ENCODE measurements at regions of chr1 and their contacts with region 1.

Region 1: DNA sequence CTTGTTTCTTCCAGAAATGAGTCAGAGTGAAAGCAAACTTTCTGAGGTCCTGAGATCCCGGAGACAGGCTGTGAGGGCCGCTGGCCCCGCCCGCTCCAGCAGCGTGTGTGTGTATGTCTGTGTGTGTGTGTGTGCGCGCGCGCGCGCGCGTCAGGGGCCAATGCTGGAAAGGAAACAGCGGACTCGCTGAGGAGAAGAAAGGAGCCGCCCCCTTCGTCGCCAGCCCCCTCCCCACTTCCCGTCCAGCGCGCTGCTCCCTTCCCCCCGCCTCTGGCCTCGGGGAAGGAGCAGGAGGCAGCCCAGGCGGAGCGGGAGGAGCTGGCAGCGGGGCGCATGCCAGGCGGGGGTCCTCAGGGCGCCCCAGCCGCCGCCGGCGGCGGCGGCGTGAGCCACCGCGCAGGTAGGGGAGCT is at the start of gene DISC1:
- DNase-seq: peak; percentile 66 to 79 (median 71)
- H3K4me3 ChIP-seq: peak within 1 kb of the TSS; percentile 43 to 79
- H3K4me3 Mint-ChIP-seq: peak within 1 kb of the TSS; percentile 94 to 100 (median 96)
- H3K27ac ChIP-seq: peak within 1 kb of the TSS; percentile 63
- H3K27ac Mint-ChIP-seq: peak within 1 kb of the TSS; percentile 91 to 98 (median 96)
- H3K4me1 ChIP-seq: peaks cover 32% of the 10 kb centered on the region
- H3K4me1 Mint-ChIP-seq: peaks cover 20 to 47% (median 33%) of the 10 kb centered on the region in 4 donors
- H3K27me3 ChIP-seq: no peaks in the 10 kb centered on the region
- H3K27me3 Mint-ChIP-seq: peaks cover 0 to 2% of the 10 kb centered on the region in 2 donors
- total RNA-seq, gene DISC1: 15.5 to 18.0 TPM

Region 2: GRCh38 chr1:231612393-231613089 is 14.0 kb before region 1 on chr1:
- CTCF ChIA-PET with region 1: interaction called, 6 read pairs
- POLR2A ChIA-PET with region 1: interaction called, 22 read pairs
- intact Hi-C with region 1: loop called (anchors 1 kb)
- DNase-seq: peak; percentile 59 to 66 (median 64)
- H3K4me3 ChIP-seq: peak overlapping the region; percentile 0 to 41
- H3K4me3 Mint-ChIP-seq: peak overlapping the region; percentile 65 to 93 (median 83)
- H3K27ac ChIP-seq: peak overlapping the region; percentile 33
- H3K27ac Mint-ChIP-seq: peak overlapping the region; percentile 28 to 94 (median 90)
- H3K4me1 ChIP-seq: peaks cover 46% of the 10 kb centered on the region
- H3K4me1 Mint-ChIP-seq: peaks cover 48 to 57% (median 51%) of the 10 kb centered on the region in 4 donors
- H3K27me3 ChIP-seq: no peaks in the 10 kb centered on the region
- H3K27me3 Mint-ChIP-seq: peaks cover 0 to 1% of the 10 kb centered on the region in 2 donors